CD4-positive, alpha-beta T cell (primary cell): ENCODE measurements at regions of chrX and their contacts with region 1.

Region 1: DNA sequence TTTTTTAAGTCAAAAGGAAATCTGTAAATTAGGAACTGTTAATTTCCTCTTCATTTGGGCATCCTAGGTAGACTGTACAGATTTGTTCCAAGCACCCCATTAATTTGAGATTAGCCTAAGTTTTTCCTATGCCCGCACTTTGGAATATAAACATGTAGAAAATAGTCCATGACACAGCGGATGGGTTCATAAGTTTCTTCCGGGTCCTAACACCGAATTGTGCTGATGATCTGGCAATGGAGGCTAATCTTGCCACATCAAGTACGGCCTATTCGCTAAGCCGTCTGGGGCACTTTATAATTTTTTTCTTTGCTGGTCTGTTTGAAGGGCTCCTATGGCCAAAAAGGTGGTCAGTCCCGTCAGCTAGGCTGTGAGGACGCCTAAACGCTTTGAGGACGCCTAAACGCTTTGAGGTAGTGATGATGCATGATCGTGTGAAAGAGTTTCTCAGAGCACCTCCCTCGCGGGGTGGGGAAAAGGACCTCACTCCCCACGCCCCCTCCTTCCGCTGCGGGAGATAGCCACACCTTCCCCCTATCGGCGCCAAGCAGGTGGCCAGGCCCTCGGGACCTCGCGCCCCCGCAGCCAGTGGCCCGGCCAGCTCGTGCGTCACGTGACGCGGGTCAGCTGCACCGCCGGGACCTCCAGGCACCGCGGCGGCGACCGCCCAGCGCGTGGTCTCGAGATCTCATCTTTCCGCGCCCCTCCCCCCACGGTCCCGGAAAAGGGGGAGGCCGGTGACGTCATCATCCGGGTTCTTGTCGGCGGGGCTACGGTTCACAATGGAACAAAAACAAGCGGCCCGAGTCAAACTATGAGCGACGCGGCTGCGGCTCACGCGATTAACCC is 977 bp upstream of the USP9X start:
- DNase-seq: peak; percentile 92 to 99 (median 95)
- ATAC-seq: peak; percentile 63
- H3K4me3 ChIP-seq: peak overlapping the region; percentile 86
- H3K4me3 Mint-ChIP-seq: peak overlapping the region; percentile 99
- H3K27ac ChIP-seq: peak overlapping the region; percentile 99
- H3K27ac Mint-ChIP-seq: peak overlapping the region; percentile 100
- H3K4me1 ChIP-seq: no peaks in the 10 kb centered on the region
- H3K4me1 Mint-ChIP-seq: peaks cover 22% of the 10 kb centered on the region
- H3K27me3 ChIP-seq: no peaks in the 10 kb centered on the region
- H3K27me3 Mint-ChIP-seq: no peaks in the 10 kb centered on the region
- CTCF ChIP-seq: no peak

Region 2: DNA sequence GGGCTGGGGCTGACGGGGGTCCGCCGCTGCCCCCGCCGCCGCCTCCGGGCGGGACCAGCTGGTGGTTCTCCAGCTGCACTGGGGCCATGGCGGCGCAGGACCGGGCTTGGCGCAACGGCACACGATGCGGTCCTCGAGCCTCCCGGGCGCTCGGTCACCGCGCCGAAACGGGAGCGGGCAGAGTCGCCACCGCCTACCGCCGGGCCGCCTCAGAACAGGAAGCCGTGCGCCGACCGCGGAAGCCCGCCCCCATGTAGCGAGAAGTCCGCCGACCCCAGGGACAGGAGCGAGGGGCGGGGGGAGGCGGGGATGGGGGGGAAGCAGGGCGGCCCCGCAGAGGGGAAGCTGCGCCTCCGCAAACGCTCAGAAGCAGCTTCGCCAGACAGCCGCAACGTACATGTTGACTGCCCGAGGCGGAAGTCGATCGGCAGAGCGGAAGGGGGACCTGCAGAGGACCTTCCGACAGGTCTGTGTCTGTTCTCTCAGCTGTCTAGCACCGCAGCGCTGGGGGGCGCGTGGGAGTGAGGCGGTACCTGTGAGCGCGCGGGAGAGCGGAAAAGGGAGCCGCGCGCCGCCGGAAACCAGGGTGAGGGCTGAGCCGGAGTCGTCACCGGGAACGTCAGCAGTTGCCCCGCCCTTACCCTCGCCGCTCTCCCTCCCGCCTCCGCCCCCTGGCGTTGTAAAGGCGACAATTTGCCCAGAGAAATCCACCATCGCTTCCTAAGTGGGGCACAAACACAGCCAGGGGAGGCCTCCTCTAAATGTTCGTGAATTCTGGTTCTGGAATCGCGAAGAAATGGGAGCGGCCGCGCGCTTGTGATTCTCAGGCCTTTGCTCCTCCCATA is 348.7 kb before region 1 on chrX and contains the start of gene MED14:
- CTCF ChIA-PET with region 1: no interaction called
- POLR2A ChIA-PET with region 1: interaction called, 22 read pairs
- intact Hi-C with region 1: loop called in 1 of 2 experiments (anchors 5 kb)
- DNase-seq: peak; percentile 80 to 96 (median 90)
- ATAC-seq: peak; percentile 88
- H3K4me3 ChIP-seq: peak within 1 kb of the TSS; percentile 65
- H3K4me3 Mint-ChIP-seq: peak within 1 kb of the TSS; percentile 97
- H3K27ac ChIP-seq: peak within 1 kb of the TSS; percentile 86 to 92
- H3K27ac Mint-ChIP-seq: peak within 1 kb of the TSS; percentile 98
- H3K4me1 ChIP-seq: peaks cover 9% of the 10 kb centered on the region
- H3K4me1 Mint-ChIP-seq: peaks cover 69% of the 10 kb centered on the region
- H3K27me3 ChIP-seq: no peaks in the 10 kb centered on the region
- H3K27me3 Mint-ChIP-seq: no peaks in the 10 kb centered on the region
- CTCF ChIP-seq: peak; percentile 38
- total RNA-seq, gene MED14: 59.9 to 67.7 TPM

Region 3: GRCh38 chrX:40933132-40933705 is 151.0 kb before region 1 on chrX:
- CTCF ChIA-PET with region 1: no interaction called
- POLR2A ChIA-PET with region 1: interaction called, 19 read pairs
- intact Hi-C with region 1: no loop called
- DNase-seq: peak in 4 of 14 experiments; percentile 21 to 53 (median 47)
- ATAC-seq: peak; percentile 49
- H3K4me3 ChIP-seq: peak overlapping the region; percentile 43
- H3K4me3 Mint-ChIP-seq: peak overlapping the region; percentile 92
- H3K27ac ChIP-seq: peak overlapping the region; percentile 29 to 66
- H3K27ac Mint-ChIP-seq: peak overlapping the region; percentile 92
- H3K4me1 ChIP-seq: peaks cover 22% of the 10 kb centered on the region
- H3K4me1 Mint-ChIP-seq: peaks cover 14% of the 10 kb centered on the region
- H3K27me3 ChIP-seq: no peaks in the 10 kb centered on the region
- H3K27me3 Mint-ChIP-seq: no peaks in the 10 kb centered on the region
- CTCF ChIP-seq: no peak

Region 4: DNA sequence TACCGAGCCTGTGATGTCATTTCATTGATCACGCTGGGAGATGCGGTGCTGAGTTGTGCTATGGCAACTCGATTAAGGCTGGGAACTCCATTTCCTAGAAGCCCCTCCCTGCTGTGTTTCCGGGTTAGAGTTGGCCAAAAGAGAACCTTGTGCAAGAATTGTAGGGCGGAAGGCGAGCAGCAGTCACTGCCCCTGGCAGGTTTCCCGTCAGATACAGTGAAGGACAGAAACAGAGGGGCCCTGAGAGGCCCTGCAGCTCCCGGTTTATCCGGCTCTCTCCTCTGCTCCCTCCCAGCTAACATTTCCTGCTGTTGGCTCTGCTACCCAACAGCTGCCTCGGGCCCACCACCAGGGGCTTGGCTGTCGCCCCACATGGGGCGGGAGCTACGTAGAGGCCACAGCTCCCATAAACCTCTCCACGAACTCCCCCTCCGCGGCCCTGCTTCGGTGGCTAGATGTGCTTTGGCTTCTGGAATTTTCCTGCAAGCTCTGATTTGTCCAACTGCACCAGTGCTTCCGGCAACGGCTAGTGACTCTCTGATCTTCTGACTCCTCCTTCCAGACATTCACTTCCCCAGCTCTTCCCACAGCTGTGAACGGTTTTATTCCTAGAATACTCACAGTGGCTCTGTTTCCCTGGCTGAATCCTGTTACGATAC is 74.0 kb before region 1 on chrX:
- CTCF ChIA-PET with region 1: no interaction called
- POLR2A ChIA-PET with region 1: interaction called, 33 read pairs
- intact Hi-C with region 1: loop called in 1 of 2 experiments (anchors 1 kb)
- DNase-seq: peak in 13 of 14 experiments; percentile 6 to 79 (median 29)
- ATAC-seq: peak; percentile 87
- H3K4me3 ChIP-seq: peak overlapping the region; percentile 49
- H3K4me3 Mint-ChIP-seq: peak overlapping the region; percentile 84
- H3K27ac ChIP-seq: peak overlapping the region; percentile 21 to 73
- H3K27ac Mint-ChIP-seq: peak overlapping the region; percentile 89
- H3K4me1 ChIP-seq: peaks cover 12% of the 10 kb centered on the region
- H3K4me1 Mint-ChIP-seq: peaks cover 23% of the 10 kb centered on the region
- H3K27me3 ChIP-seq: no peaks in the 10 kb centered on the region
- H3K27me3 Mint-ChIP-seq: no peaks in the 10 kb centered on the region
- CTCF ChIP-seq: no peak

Region 5: GRCh38 chrX:41064028-41064427 is 20.2 kb before region 1 on chrX:
- CTCF ChIA-PET with region 1: no interaction called
- POLR2A ChIA-PET with region 1: no interaction called
- intact Hi-C with region 1: no loop called
- DNase-seq: no peak
- ATAC-seq: no peak
- H3K4me3 ChIP-seq: no peak overlapping the region
- H3K4me3 Mint-ChIP-seq: no peak overlapping the region
- H3K27ac ChIP-seq: no peak overlapping the region
- H3K27ac Mint-ChIP-seq: no peak overlapping the region
- H3K4me1 ChIP-seq: no peaks in the 10 kb centered on the region
- H3K4me1 Mint-ChIP-seq: no peaks in the 10 kb centered on the region
- H3K27me3 ChIP-seq: no peaks in the 10 kb centered on the region
- H3K27me3 Mint-ChIP-seq: no peaks in the 10 kb centered on the region
- CTCF ChIP-seq: no peak

Region 6: GRCh38 chrX:41110801-41111625 is 26.7 kb after region 1 on chrX:
- CTCF ChIA-PET with region 1: interaction called, 29 read pairs
- POLR2A ChIA-PET with region 1: interaction called, 48 read pairs
- intact Hi-C with region 1: loop called (anchors 1 to 2 kb)
- DNase-seq: peak in 2 of 14 experiments; percentile 23 to 34
- ATAC-seq: no peak
- H3K4me3 ChIP-seq: no peak overlapping the region
- H3K4me3 Mint-ChIP-seq: peak overlapping the region; percentile 69
- H3K27ac ChIP-seq: no peak overlapping the region
- H3K27ac Mint-ChIP-seq: peak overlapping the region; percentile 69
- H3K4me1 ChIP-seq: peaks cover 21% of the 10 kb centered on the region
- H3K4me1 Mint-ChIP-seq: peaks cover 76% of the 10 kb centered on the region
- H3K27me3 ChIP-seq: no peaks in the 10 kb centered on the region
- H3K27me3 Mint-ChIP-seq: no peaks in the 10 kb centered on the region
- CTCF ChIP-seq: no peak

Region 7: GRCh38 chrX:41333744-41334259 is 249.5 kb after region 1 on chrX and contains the start of gene DDX3X:
- CTCF ChIA-PET with region 1: no interaction called
- POLR2A ChIA-PET with region 1: interaction called, 7 read pairs
- intact Hi-C with region 1: loop called in 1 of 2 experiments (anchors 5 kb)
- DNase-seq: peak; percentile 68 to 93 (median 82)
- ATAC-seq: peak; percentile 56
- H3K4me3 ChIP-seq: peak within 1 kb of the TSS; percentile 100
- H3K4me3 Mint-ChIP-seq: peak within 1 kb of the TSS; percentile 99
- H3K27ac ChIP-seq: peak within 1 kb of the TSS; percentile 98 to 100
- H3K27ac Mint-ChIP-seq: peak within 1 kb of the TSS; percentile 99
- H3K4me1 ChIP-seq: peaks cover 22% of the 10 kb centered on the region
- H3K4me1 Mint-ChIP-seq: peaks cover 35% of the 10 kb centered on the region
- H3K27me3 ChIP-seq: no peaks in the 10 kb centered on the region
- H3K27me3 Mint-ChIP-seq: peaks cover 4% of the 10 kb centered on the region
- CTCF ChIP-seq: no peak
- total RNA-seq, gene DDX3X: 610 to 653 TPM